ENCODE measurements at regions of chr1 and their contacts with region 1.

Region 1: GRCh38 chr1:25204797-25205480 is 27.4 kb downstream of the SYF2 start:
- H3K4me3 ChIP-seq: no peak overlapping the region
- H3K27ac ChIP-seq: no peak overlapping the region
- H3K4me1 ChIP-seq: no peaks in the 10 kb centered on the region
- CTCF ChIP-seq: no peak

Region 2: GRCh38 chr1:24860811-24861231 is 344.1 kb before region 1 on chr1:
- CTCF ChIA-PET with region 1: interaction called, 10 read pairs
- POLR2A ChIA-PET with region 1: no interaction called
- H3K4me3 ChIP-seq: no peak overlapping the region
- H3K27ac ChIP-seq: no peak overlapping the region
- H3K4me1 ChIP-seq: peaks cover 6% of the 10 kb centered on the region; the same call in 1 of the 2 replicates
- CTCF ChIP-seq: no peak

Region 3: GRCh38 chr1:25117233-25117823 is 87.6 kb before region 1 on chr1:
- CTCF ChIA-PET with region 1: interaction called, 13 read pairs
- POLR2A ChIA-PET with region 1: no interaction called
- H3K4me3 ChIP-seq: no peak overlapping the region
- H3K27ac ChIP-seq: no peak overlapping the region
- H3K4me1 ChIP-seq: no peaks in the 10 kb centered on the region
- CTCF ChIP-seq: no peak

Region 4: GRCh38 chr1:25157846-25158245 is 47.1 kb before region 1 on chr1:
- CTCF ChIA-PET with region 1: no interaction called
- POLR2A ChIA-PET with region 1: no interaction called
- H3K4me3 ChIP-seq: no peak overlapping the region
- H3K27ac ChIP-seq: no peak overlapping the region
- H3K4me1 ChIP-seq: no peaks in the 10 kb centered on the region
- CTCF ChIP-seq: no peak

Region 5: GRCh38 chr1:25190260-25190659 is 14.7 kb before region 1 on chr1:
- CTCF ChIA-PET with region 1: interaction called, 10 read pairs
- POLR2A ChIA-PET with region 1: no interaction called
- H3K4me3 ChIP-seq: no peak overlapping the region
- H3K27ac ChIP-seq: no peak overlapping the region
- H3K4me1 ChIP-seq: no peaks in the 10 kb centered on the region
- CTCF ChIP-seq: no peak

Region 6: GRCh38 chr1:25217598-25218232 is 12.8 kb after region 1 on chr1:
- CTCF ChIA-PET with region 1: interaction called, 17 read pairs
- POLR2A ChIA-PET with region 1: no interaction called
- H3K4me3 ChIP-seq: no peak overlapping the region
- H3K27ac ChIP-seq: no peak overlapping the region
- H3K4me1 ChIP-seq: no peaks in the 10 kb centered on the region
- CTCF ChIP-seq: no peak

Region 7: GRCh38 chr1:25232027-25232865 is 27.3 kb after region 1 on chr1 and contains the start of gene SYF2:
- CTCF ChIA-PET with region 1: interaction called, 10 read pairs
- POLR2A ChIA-PET with region 1: interaction called, 4 read pairs
- H3K4me3 ChIP-seq: peak within 1 kb of the TSS; percentile 94
- H3K27ac ChIP-seq: peak within 1 kb of the TSS; percentile 53
- H3K4me1 ChIP-seq: 0 out of 2 replicates have a peak, but pooled peaks cover 3% of the 10 kb centered on the region
- CTCF ChIP-seq: no peak

Measured in HEK293 (cell line).